PC-9 (cell line): ENCODE measurements at regions of chr2 and their contacts with region 1.

Region 1: GRCh38 chr2:74482801-74483674 is at the starts of genes CCDC142 and TTC31:
- DNase-seq: peak; percentile 89 to 90
- H3K4me3 ChIP-seq: peak within 1 kb of the TSS; percentile 92
- H3K27ac ChIP-seq: peak within 1 kb of the TSS; percentile 53
- H3K4me1 ChIP-seq: peaks cover 19% of the 10 kb centered on the region
- H3K27me3 ChIP-seq: no peaks in the 10 kb centered on the region
- CTCF ChIP-seq: peak; percentile 91
- total RNA-seq, gene CCDC142: 16.8 and 19.8 TPM in 2 replicates
- total RNA-seq, gene TTC31: 20.1 and 21.8 TPM in 2 replicates

Region 2: GRCh38 chr2:73385595-73386341 is 1097.3 kb before region 1 on chr2 and contains the start of gene ALMS1:
- CTCF ChIA-PET with region 1: no interaction called
- POLR2A ChIA-PET with region 1: interaction called, 19 read pairs
- intact Hi-C with region 1: no loop called
- DNase-seq: peak; percentile 80 to 86
- H3K4me3 ChIP-seq: peak within 1 kb of the TSS; percentile 99
- H3K27ac ChIP-seq: peak within 1 kb of the TSS; percentile 62
- H3K4me1 ChIP-seq: peaks cover 18% of the 10 kb centered on the region
- H3K27me3 ChIP-seq: peaks cover 21% of the 10 kb centered on the region
- CTCF ChIP-seq: no peak
- total RNA-seq, gene ALMS1: 14.7 and 16.7 TPM in 2 replicates

Region 3: GRCh38 chr2:74507145-74507925 is 24.3 kb after region 1 on chr2 and contains the start of gene PCGF1:
- CTCF ChIA-PET with region 1: no interaction called
- POLR2A ChIA-PET with region 1: no interaction called
- intact Hi-C with region 1: loop called (anchors 1 kb)
- DNase-seq: peak; percentile 97
- H3K4me3 ChIP-seq: peak within 1 kb of the TSS; percentile 64
- H3K27ac ChIP-seq: peak within 1 kb of the TSS; percentile 73
- H3K4me1 ChIP-seq: peaks cover 26% of the 10 kb centered on the region
- H3K27me3 ChIP-seq: no peaks in the 10 kb centered on the region
- CTCF ChIP-seq: peak; percentile 54
- total RNA-seq, gene PCGF1: 24.9 and 31.3 TPM in 2 replicates

Region 4: GRCh38 chr2:74553892-74554645 is 71.0 kb after region 1 on chr2 and contains the start of gene LOXL3:
- CTCF ChIA-PET with region 1: no interaction called
- POLR2A ChIA-PET with region 1: no interaction called
- intact Hi-C with region 1: loop called (anchors 5 kb)
- DNase-seq: peak; percentile 57 to 74
- H3K4me3 ChIP-seq: peak within 1 kb of the TSS; percentile 78
- H3K27ac ChIP-seq: no peak within 1 kb of the TSS
- H3K4me1 ChIP-seq: peaks cover 16% of the 10 kb centered on the region
- H3K27me3 ChIP-seq: no peaks in the 10 kb centered on the region
- CTCF ChIP-seq: no peak
- total RNA-seq, gene LOXL3: 3.1 and 5.0 TPM in 2 replicates

Region 5: GRCh38 chr2:74632209-74632938 is 149.3 kb after region 1 on chr2:
- CTCF ChIA-PET with region 1: no interaction called
- POLR2A ChIA-PET with region 1: no interaction called
- intact Hi-C with region 1: no loop called
- DNase-seq: peak in 1 of 2 experiments; percentile 44
- H3K4me3 ChIP-seq: no peak overlapping the region
- H3K27ac ChIP-seq: no peak overlapping the region
- H3K4me1 ChIP-seq: peaks cover 11% of the 10 kb centered on the region
- H3K27me3 ChIP-seq: no peaks in the 10 kb centered on the region
- CTCF ChIP-seq: no peak

Region 6: GRCh38 chr2:74653985-74654882 is 171.2 kb after region 1 on chr2 and contains the start of gene SEMA4F:
- CTCF ChIA-PET with region 1: no interaction called
- POLR2A ChIA-PET with region 1: no interaction called
- intact Hi-C with region 1: loop called (anchors 10 kb)
- DNase-seq: peak; percentile 92 to 98
- H3K4me3 ChIP-seq: peak within 1 kb of the TSS; percentile 56
- H3K27ac ChIP-seq: no peak within 1 kb of the TSS
- H3K4me1 ChIP-seq: no peaks in the 10 kb centered on the region; the same call in 1 of the 2 replicates
- H3K27me3 ChIP-seq: no peaks in the 10 kb centered on the region
- CTCF ChIP-seq: no peak
- total RNA-seq, gene SEMA4F: 10.6 and 12.3 TPM in 2 replicates